A673 (cell line): ENCODE measurements at regions of chr16 and their contacts with region 1.

Region 1: GRCh38 chr16:1677802-1678496 is at the start of gene JPT2:
- DNase-seq: peak; percentile 99
- H3K4me3 ChIP-seq: peak within 1 kb of the TSS; percentile 87
- H3K27ac ChIP-seq: peak within 1 kb of the TSS; percentile 90
- H3K4me1 ChIP-seq: peaks cover 18% of the 10 kb centered on the region
- H3K27me3 ChIP-seq: no peaks in the 10 kb centered on the region
- CTCF ChIP-seq: no peak
- total RNA-seq, gene JPT2: 197 and 200 TPM in 2 replicates

Region 2: GRCh38 chr16:1040346-1040745 is 637.6 kb before region 1 on chr16:
- CTCF ChIA-PET with region 1: no interaction called
- POLR2A ChIA-PET with region 1: interaction called, 11 read pairs
- intact Hi-C with region 1: no loop called
- DNase-seq: no peak
- H3K4me3 ChIP-seq: no peak overlapping the region
- H3K27ac ChIP-seq: no peak overlapping the region
- H3K4me1 ChIP-seq: peaks cover 14% of the 10 kb centered on the region
- H3K27me3 ChIP-seq: no peaks in the 10 kb centered on the region
- CTCF ChIP-seq: no peak

Region 3: GRCh38 chr16:1158128-1158800 is 519.7 kb before region 1 on chr16:
- CTCF ChIA-PET with region 1: no interaction called
- POLR2A ChIA-PET with region 1: interaction called, 10 read pairs
- intact Hi-C with region 1: no loop called
- DNase-seq: peak; percentile 56
- H3K4me3 ChIP-seq: no peak overlapping the region
- H3K27ac ChIP-seq: peak overlapping the region; percentile 57
- H3K4me1 ChIP-seq: peaks cover 52% of the 10 kb centered on the region
- H3K27me3 ChIP-seq: no peaks in the 10 kb centered on the region
- CTCF ChIP-seq: no peak

Region 4: DNA sequence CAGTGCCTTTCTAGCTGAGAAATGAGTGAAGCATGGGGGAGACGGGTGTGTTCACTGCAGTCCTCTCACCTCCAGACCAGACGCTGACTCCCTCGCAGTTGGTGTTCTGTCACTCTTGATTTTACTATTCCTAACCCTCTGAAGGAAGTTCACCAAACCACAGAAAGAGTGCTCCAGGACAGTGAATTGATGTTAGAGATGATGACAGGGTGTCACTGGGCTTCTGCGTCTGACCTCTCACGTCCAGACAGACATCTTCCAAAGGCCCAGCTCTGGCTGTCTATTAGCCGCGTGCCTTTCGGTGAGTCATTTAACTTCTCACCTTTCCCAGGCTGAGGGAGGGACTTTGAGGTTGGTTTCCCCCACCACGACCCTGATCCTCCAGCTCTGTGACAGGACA is 57.6 kb before region 1 on chr16:
- CTCF ChIA-PET with region 1: no interaction called
- POLR2A ChIA-PET with region 1: interaction called, 12 read pairs
- intact Hi-C with region 1: no loop called
- DNase-seq: no peak
- H3K4me3 ChIP-seq: no peak overlapping the region
- H3K27ac ChIP-seq: no peak overlapping the region
- H3K4me1 ChIP-seq: peaks cover 5% of the 10 kb centered on the region
- H3K27me3 ChIP-seq: no peaks in the 10 kb centered on the region
- CTCF ChIP-seq: no peak